H1 (cell line): ENCODE measurements at regions of chr6 and their contacts with region 1.

Region 1: DNA sequence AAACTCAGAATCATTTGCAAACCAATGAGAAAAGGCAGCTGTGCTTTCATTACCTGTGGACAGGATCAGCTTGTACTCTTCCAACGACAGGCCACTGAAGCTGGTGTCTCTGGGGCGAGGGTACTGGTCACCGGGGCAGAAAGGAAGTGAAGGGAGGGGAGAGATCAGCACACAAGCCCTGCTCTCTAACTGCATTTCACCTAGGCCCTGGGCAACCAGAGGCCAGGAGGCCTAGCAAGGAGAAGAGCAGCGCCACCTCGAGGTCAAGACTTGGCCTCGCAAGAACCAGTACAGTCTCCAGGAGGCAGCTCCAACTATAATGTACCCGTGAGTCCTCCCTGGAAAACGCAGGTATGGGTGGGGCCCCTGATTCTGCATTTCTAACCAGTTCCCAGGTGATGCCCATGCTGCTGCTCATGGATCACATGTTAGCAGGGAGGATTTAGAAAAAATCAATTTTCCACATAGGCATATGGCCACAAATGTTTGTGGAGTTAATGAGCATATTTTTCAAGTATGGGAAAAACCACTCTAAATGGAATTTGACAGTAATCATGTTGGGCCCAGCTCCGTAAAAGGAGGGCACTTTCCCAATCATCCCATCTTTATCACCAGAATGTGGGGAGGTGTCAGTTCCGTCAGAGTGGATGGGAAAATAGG is 11.0 kb downstream of the UQCC2 start:
- DNase-seq: peak; percentile 63 to 84
- H3K4me3 ChIP-seq: no peak overlapping the region
- H3K27ac ChIP-seq: no peak overlapping the region
- H3K4me1 ChIP-seq: peaks cover 0 to 5% (median 0%) of the 10 kb centered on the region in 4 experiments; a peak in 2 of 7 replicates
- H3K27me3 ChIP-seq: no peaks in the 10 kb centered on the region
- CTCF ChIP-seq: peak in 2 of 3 experiments; percentile 92 to 98; a peak in 3 of 4 replicates
- EP300 ChIP-seq: no peak
- POLR2A ChIP-seq: no peak
- RAD21 ChIP-seq: peak; percentile 80 to 82

Region 2: GRCh38 chr6:33557376-33557775 is 143.1 kb before region 1 on chr6:
- CTCF ChIA-PET with region 1: no interaction called
- POLR2A ChIA-PET with region 1: no interaction called
- DNase-seq: no peak
- H3K4me3 ChIP-seq: no peak overlapping the region
- H3K27ac ChIP-seq: no peak overlapping the region
- H3K4me1 ChIP-seq: no peaks in the 10 kb centered on the region
- H3K27me3 ChIP-seq: no peaks in the 10 kb centered on the region
- CTCF ChIP-seq: no peak
- EP300 ChIP-seq: no peak
- POLR2A ChIP-seq: no peak
- RAD21 ChIP-seq: no peak

Region 3: DNA sequence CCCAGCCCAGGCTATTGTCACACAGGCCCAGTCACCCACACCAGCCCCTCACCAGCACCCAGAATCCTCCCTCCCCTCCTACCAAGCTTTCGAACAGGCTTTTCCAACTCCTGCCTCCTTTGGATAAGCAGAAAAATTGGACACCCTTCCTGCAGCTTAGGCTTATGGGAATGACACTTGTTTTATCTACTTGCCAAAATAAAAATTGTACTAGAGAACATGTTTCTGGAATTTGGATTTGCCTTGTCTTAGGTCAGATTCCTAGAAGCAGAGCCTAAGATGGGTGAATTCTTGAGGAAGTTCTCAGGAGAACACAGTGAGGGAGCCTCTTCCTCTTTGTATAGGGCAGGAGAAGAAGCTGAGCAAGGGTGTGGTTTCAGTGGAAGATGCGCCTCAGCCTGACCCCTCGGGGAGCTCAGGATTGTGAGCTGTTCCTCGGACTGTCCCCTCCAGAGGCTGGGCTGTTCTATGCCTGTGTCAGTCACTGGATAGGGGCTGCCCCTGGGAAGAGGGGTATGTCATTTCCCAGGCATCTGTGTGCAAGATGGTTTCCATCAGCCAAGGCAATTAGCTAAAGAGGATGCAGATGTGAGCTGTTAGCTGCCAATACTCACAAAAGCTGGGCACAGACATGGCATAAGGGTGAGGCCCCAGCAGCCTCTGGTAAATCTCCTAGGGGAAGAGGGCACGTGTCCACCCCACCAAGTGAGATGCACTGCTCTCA is 45.5 kb before region 1 on chr6:
- CTCF ChIA-PET with region 1: interaction called, 15 read pairs
- POLR2A ChIA-PET with region 1: interaction called, 3 read pairs
- DNase-seq: no peak
- H3K4me3 ChIP-seq: no peak overlapping the region
- H3K27ac ChIP-seq: no peak overlapping the region
- H3K4me1 ChIP-seq: peaks cover 0 to 16% (median 7%) of the 10 kb centered on the region in 4 experiments; a peak in 4 of 7 replicates
- H3K27me3 ChIP-seq: no peaks in the 10 kb centered on the region
- CTCF ChIP-seq: no peak
- EP300 ChIP-seq: no peak
- POLR2A ChIP-seq: no peak
- RAD21 ChIP-seq: no peak

Region 4: DNA sequence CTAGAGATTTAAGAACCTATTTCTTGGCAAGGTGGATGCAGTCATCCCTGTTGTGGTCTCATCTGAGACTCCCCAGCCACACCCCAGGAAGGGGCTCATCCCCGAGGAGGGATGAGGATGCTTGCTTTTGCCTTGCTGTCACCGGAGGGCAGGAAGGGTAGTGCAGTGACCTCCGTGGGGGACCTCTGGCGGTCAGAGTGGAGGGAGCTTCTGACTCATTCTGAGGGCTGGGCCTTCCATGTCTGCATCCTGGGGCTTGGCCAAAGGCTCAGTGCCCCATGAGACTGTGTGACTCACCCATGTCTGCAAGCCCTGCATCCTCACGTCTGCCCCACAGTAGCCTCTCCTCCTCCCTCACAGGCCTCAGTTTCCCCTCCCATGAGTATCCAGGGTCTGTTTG is 27.7 kb before region 1 on chr6:
- CTCF ChIA-PET with region 1: interaction called, 17 read pairs
- POLR2A ChIA-PET with region 1: interaction called, 5 read pairs
- DNase-seq: no peak
- H3K4me3 ChIP-seq: no peak overlapping the region
- H3K27ac ChIP-seq: no peak overlapping the region
- H3K4me1 ChIP-seq: peaks cover 0 to 3% (median 1%) of the 10 kb centered on the region in 4 experiments; a peak in 1 of 7 replicates
- H3K27me3 ChIP-seq: no peaks in the 10 kb centered on the region
- CTCF ChIP-seq: peak in 2 of 3 experiments; percentile 45 to 73; a peak in 3 of 4 replicates
- EP300 ChIP-seq: no peak
- POLR2A ChIP-seq: no peak
- RAD21 ChIP-seq: peak; percentile 48 to 56

Region 5: DNA sequence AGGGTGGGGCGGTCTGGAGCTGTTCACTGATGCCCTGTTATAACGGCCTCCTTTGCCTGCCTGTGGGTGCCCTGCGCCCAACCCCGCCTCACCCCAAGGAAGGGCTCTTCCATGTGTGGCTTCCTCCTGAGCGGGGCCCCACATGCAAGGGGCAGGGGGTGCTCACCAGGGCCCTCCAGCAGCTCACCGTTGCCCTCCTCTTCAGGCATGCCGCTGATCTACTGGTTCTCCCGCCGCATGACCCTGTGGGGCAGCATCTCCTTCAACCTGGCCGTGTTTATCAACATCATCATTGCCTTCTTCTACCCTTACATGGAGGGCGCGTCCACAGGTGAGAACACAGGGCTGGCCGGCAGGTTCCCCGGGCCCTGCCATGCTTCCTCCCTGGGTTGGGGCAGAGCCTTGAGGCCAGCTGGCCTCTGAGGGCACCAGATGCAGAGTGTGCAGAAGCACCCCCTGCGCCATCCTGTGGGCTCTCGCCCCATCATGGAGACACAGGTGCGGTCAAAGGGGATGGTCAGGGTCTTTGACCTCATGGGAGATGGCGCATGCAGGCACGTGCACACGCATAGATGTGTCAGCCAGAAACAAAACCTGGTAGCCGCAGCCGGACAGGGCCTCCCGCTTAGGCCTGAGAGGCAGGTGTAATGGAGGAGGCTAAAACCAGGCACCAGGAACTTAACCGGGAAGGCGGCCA is 11.9 kb before region 1 on chr6:
- CTCF ChIA-PET with region 1: interaction called, 18 read pairs
- POLR2A ChIA-PET with region 1: interaction called, 7 read pairs
- DNase-seq: no peak
- H3K4me3 ChIP-seq: no peak overlapping the region
- H3K27ac ChIP-seq: no peak overlapping the region
- H3K4me1 ChIP-seq: peaks cover 0 to 5% (median 1%) of the 10 kb centered on the region in 4 experiments; a peak in 3 of 7 replicates
- H3K27me3 ChIP-seq: no peaks in the 10 kb centered on the region
- CTCF ChIP-seq: no peak
- EP300 ChIP-seq: no peak
- POLR2A ChIP-seq: no peak
- RAD21 ChIP-seq: no peak

Region 6: GRCh38 chr6:33761922-33762629 is 61.6 kb after region 1 on chr6:
- CTCF ChIA-PET with region 1: interaction called, 21 read pairs
- POLR2A ChIA-PET with region 1: interaction called, 3 read pairs
- DNase-seq: peak in 1 of 2 experiments; percentile 75
- H3K4me3 ChIP-seq: no peak overlapping the region
- H3K27ac ChIP-seq: no peak overlapping the region
- H3K4me1 ChIP-seq: no peaks in the 10 kb centered on the region
- H3K27me3 ChIP-seq: no peaks in the 10 kb centered on the region
- CTCF ChIP-seq: peak in 2 of 3 experiments; percentile 80 to 81; a peak in 3 of 4 replicates
- EP300 ChIP-seq: no peak
- POLR2A ChIP-seq: no peak
- RAD21 ChIP-seq: peak; percentile 74 to 83

Region 7: GRCh38 chr6:33869121-33869520 is 168.6 kb after region 1 on chr6:
- CTCF ChIA-PET with region 1: no interaction called
- POLR2A ChIA-PET with region 1: no interaction called
- DNase-seq: no peak
- H3K4me3 ChIP-seq: no peak overlapping the region
- H3K27ac ChIP-seq: no peak overlapping the region
- H3K4me1 ChIP-seq: peaks cover 0 to 15% (median 10%) of the 10 kb centered on the region in 4 experiments; a peak in 5 of 7 replicates
- H3K27me3 ChIP-seq: 0 out of 7 replicates have a peak, but pooled peaks cover 0 to 1% (median 0%) of the 10 kb centered on the region in 4 experiments
- CTCF ChIP-seq: no peak
- EP300 ChIP-seq: no peak
- POLR2A ChIP-seq: no peak
- RAD21 ChIP-seq: no peak